Common myeloid progenitor, CD34-positive (primary cell): ENCODE measurements at regions of chr5 and their contacts with region 1.

Region 1: DNA sequence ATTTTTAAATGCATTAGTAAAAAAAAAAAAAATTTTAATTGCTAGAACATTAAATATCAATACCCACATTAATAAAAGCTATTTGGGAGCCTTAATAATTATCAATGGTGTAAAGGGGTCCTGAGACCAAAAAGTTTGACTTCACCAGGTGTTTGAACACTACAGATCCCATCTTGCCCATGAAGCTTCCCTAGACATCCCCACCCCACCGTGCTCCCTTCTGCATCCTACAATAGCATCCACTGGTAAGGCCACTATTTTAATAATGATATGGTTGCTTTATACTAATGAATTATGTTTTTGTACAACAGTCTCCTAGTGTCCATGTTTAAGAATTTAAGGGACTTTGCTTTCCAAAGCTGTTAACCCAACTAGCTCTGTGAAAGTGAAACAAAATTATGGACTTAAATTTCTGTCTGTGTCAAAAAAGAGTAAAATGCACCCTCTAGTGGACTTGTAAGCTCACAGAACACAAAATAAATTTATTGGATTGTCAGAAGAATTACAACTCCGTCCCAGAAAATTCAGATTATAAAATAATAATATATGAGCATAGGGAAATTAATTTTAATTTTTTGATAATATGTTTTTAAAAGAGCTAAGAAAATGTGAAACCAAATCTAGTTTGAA is 76.0 kb downstream of the ARL15 start:
- DNase-seq: peak; percentile 53 to 78 (median 76)
- H3K4me3 ChIP-seq: peak overlapping the region in 1 of 7 experiments; percentile 4
- H3K27ac ChIP-seq: no peak overlapping the region
- H3K4me1 ChIP-seq: peaks cover 0 to 3% (median 0%) of the 10 kb centered on the region in 4 experiments
- H3K27me3 ChIP-seq: no peaks in the 10 kb centered on the region

Region 2: DNA sequence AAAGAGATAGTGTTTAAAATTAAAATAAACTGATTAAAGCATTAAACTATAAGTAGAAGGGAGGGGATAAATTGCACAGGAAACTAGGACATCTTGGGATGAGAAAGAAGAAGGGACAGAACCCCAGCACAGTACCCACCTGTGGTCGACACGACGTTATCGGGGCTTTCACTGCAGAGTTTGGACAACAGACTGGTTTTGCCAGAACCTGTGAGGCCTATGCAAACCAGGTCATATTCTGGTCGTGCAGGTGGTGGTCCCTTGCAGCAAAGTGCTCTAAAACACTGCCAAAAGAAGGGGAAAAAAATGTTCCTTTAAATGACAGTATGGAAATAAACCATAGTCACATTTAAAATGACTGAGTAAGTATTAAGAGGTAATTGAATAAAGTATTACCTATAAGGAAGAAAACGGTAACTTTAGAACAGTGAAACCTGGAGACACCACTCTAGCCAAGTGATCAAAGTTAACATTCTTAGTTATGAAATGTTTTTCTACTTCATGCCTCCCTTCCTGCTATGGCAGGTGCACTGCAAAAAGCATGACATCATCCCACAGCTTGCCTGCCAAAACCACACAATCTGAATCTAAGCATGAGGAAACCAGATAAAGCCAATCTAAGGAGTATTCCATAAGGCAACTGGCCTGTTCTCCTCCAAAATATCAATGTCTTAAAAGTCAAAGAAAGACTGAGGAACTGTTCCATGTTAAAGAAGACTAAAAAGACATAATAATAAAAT is 62.6 kb before region 1 on chr5:
- CTCF ChIA-PET with region 1: no interaction called
- POLR2A ChIA-PET with region 1: no interaction called
- DNase-seq: peak in 2 of 3 donors; percentile 17 to 26
- H3K4me3 ChIP-seq: no peak overlapping the region
- H3K27ac ChIP-seq: no peak overlapping the region
- H3K4me1 ChIP-seq: no peaks in the 10 kb centered on the region
- H3K27me3 ChIP-seq: no peaks in the 10 kb centered on the region

Region 3: DNA sequence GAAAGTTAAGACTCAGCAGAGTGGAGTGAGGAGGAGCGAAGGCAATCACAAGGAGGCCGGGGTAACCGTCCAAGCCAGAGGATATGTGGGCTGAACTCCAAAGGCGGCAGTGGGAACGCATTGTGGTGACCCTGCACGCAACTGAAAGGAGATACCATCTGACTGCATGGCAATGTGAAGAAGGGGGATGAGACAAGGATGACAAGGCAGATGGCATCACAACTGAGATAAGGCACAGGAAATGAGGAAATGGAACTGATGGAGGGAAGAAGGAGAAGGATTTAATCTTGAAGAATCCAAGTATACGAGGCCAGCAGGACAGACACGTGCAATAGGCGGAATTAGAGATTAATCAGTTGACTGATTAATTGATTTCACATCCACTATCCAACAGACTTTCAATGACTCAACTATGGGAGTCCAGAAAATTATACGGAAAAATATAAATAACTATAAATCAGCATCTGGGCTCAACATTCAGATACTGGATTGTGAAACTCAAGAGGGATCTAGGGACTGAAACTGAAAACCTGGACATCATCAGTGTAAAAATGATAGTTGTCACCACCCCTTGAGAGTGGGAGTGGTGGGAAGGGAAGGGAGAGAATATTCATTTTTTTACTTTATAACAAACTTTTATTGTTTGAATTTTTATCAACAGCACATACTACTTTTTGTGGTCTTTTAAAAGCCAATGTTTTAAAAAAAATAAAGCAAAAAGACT is 10.2 kb before region 1 on chr5:
- CTCF ChIA-PET with region 1: interaction called, 11 read pairs
- POLR2A ChIA-PET with region 1: no interaction called
- DNase-seq: peak in 2 of 3 donors; percentile 23 to 32
- H3K4me3 ChIP-seq: no peak overlapping the region
- H3K27ac ChIP-seq: no peak overlapping the region
- H3K4me1 ChIP-seq: peaks cover 0 to 4% (median 0%) of the 10 kb centered on the region in 4 experiments
- H3K27me3 ChIP-seq: no peaks in the 10 kb centered on the region